CD14-positive monocyte (primary cell): ENCODE measurements at regions of chr17 and their contacts with region 1.

Region 1: GRCh38 chr17:49227436-49228261 is 2.9 kb downstream of the PHOSPHO1 start:
- DNase-seq: peak; percentile 59 to 82 (median 74)
- H3K4me3 ChIP-seq: no peak overlapping the region
- H3K4me3 Mint-ChIP-seq: peak overlapping the region in 1 of 2 donors; percentile 60
- H3K27ac ChIP-seq: no peak overlapping the region
- H3K27ac Mint-ChIP-seq: peak overlapping the region in 2 of 7 donors; percentile 39 to 46
- H3K4me1 ChIP-seq: peaks cover 44 to 58% of the 10 kb centered on the region in 2 donors
- H3K4me1 Mint-ChIP-seq: peaks cover 55% of the 10 kb centered on the region
- H3K27me3 ChIP-seq: peaks cover 21 to 64% of the 10 kb centered on the region in 2 donors
- H3K27me3 Mint-ChIP-seq: peaks cover 56 to 85% (median 71%) of the 10 kb centered on the region in 3 donors
- CTCF ChIP-seq: peak; percentile 88

Region 2: GRCh38 chr17:48825446-48826381 is 401.9 kb before region 1 on chr17:
- intact Hi-C with region 1: no loop called
- DNase-seq: no peak
- H3K4me3 ChIP-seq: no peak overlapping the region
- H3K4me3 Mint-ChIP-seq: no peak overlapping the region
- H3K27ac ChIP-seq: no peak overlapping the region
- H3K27ac Mint-ChIP-seq: peak overlapping the region in 1 of 7 donors; percentile 50
- H3K4me1 ChIP-seq: no peaks in the 10 kb centered on the region
- H3K4me1 Mint-ChIP-seq: peaks cover 1% of the 10 kb centered on the region
- H3K27me3 ChIP-seq: peaks cover 0 to 3% of the 10 kb centered on the region in 2 donors
- H3K27me3 Mint-ChIP-seq: peaks cover 9 to 34% (median 16%) of the 10 kb centered on the region in 3 donors
- CTCF ChIP-seq: no peak

Region 3: DNA sequence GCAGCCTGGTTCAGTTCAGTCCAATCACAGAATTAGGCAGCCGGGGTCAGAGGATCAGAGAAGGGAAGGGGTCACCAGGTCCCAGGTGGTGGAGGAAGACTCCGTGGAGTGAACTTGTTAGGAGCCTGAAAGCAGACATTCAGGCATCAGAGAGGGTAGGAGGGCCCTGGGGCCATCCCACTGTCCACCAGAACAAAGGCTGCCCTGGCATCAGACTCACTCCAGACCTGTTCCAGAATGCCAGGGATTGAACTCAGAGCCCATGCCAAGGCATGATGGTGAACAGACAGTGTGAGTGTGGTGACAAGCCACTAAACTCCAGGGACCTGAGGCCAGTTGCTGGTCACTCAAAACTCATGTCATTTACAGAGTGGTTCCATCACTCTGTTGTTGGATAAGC is 57.4 kb before region 1 on chr17:
- intact Hi-C with region 1: no loop called
- DNase-seq: no peak
- H3K4me3 ChIP-seq: no peak overlapping the region
- H3K4me3 Mint-ChIP-seq: no peak overlapping the region
- H3K27ac ChIP-seq: no peak overlapping the region
- H3K27ac Mint-ChIP-seq: no peak overlapping the region
- H3K4me1 ChIP-seq: no peaks in the 10 kb centered on the region
- H3K4me1 Mint-ChIP-seq: peaks cover 1% of the 10 kb centered on the region
- H3K27me3 ChIP-seq: peaks cover 0 to 17% of the 10 kb centered on the region in 2 donors
- H3K27me3 Mint-ChIP-seq: peaks cover 12 to 44% (median 30%) of the 10 kb centered on the region in 3 donors
- CTCF ChIP-seq: no peak

Region 4: GRCh38 chr17:49290690-49291359 is 63.2 kb after region 1 on chr17:
- intact Hi-C with region 1: loop called in 1 of 2 experiments (anchors 5 kb)
- DNase-seq: peak; percentile 5 to 32 (median 15)
- H3K4me3 ChIP-seq: no peak overlapping the region
- H3K4me3 Mint-ChIP-seq: no peak overlapping the region
- H3K27ac ChIP-seq: no peak overlapping the region
- H3K27ac Mint-ChIP-seq: no peak overlapping the region
- H3K4me1 ChIP-seq: no peaks in the 10 kb centered on the region
- H3K4me1 Mint-ChIP-seq: peaks cover 2% of the 10 kb centered on the region
- H3K27me3 ChIP-seq: no peaks in the 10 kb centered on the region
- H3K27me3 Mint-ChIP-seq: peaks cover 0 to under 1% (median 0%) of the 10 kb centered on the region in 3 donors
- CTCF ChIP-seq: peak; percentile 74